Psoas muscle (tissue), 8 donors: ENCODE measurements at regions of chr1 and their contacts with region 1.

Region 1: GRCh38 chr1:159763686-159764085 is 17.1 kb upstream of the DUSP23 start:
- DNase-seq: no peak
- ATAC-seq: no peak
- H3K4me3 ChIP-seq: no peak overlapping the region
- H3K27ac ChIP-seq: no peak overlapping the region
- H3K4me1 ChIP-seq: no peaks in the 10 kb centered on the region
- H3K27me3 ChIP-seq: no peaks in the 10 kb centered on the region
- CTCF ChIP-seq: no peak

Region 2: DNA sequence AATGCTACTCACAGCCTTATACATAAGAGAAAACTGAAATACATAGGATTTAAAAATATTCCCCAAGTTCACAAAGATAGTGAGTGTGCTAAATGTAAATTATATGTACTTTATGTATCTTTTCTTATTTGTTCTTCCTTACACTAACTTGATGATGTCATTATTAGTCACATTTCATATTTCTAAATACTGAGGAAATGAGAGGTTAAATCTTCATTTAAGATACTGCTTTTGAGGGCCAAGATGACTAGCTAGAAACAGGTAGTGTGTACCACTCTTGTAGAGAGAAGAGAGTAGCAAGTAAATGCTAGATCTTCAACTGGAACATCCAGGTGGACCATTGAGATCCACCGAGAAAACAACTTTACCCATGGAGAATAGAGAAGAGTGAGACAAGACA is 802.5 kb before region 1 on chr1:
- intact Hi-C with region 1: no loop called
- DNase-seq: no peak
- ATAC-seq: no peak
- H3K4me3 ChIP-seq: no peak overlapping the region
- H3K27ac ChIP-seq: no peak overlapping the region
- H3K4me1 ChIP-seq: no peaks in the 10 kb centered on the region
- H3K27me3 ChIP-seq: no peaks in the 10 kb centered on the region
- CTCF ChIP-seq: no peak

Region 3: DNA sequence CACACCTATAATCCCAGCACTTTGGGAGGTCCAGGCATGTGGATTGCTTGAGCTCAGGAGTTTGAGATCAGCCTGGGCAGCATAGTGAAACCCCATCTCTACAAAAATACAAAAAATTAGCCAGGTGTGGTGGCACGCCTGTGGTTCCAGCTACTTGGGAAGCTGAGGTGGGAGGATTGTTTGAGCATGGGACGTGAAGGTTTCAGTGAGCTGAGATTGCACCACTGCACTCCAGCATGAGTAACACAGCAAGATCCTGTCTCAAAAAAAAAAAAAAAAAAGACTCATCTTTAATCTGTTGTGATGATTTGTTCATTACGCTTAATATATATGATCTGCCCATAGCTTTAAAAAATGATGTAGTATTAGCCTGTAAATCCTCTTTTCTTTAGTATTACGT is 280.2 kb before region 1 on chr1:
- intact Hi-C with region 1: no loop called
- DNase-seq: no peak
- ATAC-seq: no peak
- H3K4me3 ChIP-seq: no peak overlapping the region
- H3K27ac ChIP-seq: no peak overlapping the region
- H3K4me1 ChIP-seq: no peaks in the 10 kb centered on the region
- H3K27me3 ChIP-seq: no peaks in the 10 kb centered on the region
- CTCF ChIP-seq: no peak

Region 4: DNA sequence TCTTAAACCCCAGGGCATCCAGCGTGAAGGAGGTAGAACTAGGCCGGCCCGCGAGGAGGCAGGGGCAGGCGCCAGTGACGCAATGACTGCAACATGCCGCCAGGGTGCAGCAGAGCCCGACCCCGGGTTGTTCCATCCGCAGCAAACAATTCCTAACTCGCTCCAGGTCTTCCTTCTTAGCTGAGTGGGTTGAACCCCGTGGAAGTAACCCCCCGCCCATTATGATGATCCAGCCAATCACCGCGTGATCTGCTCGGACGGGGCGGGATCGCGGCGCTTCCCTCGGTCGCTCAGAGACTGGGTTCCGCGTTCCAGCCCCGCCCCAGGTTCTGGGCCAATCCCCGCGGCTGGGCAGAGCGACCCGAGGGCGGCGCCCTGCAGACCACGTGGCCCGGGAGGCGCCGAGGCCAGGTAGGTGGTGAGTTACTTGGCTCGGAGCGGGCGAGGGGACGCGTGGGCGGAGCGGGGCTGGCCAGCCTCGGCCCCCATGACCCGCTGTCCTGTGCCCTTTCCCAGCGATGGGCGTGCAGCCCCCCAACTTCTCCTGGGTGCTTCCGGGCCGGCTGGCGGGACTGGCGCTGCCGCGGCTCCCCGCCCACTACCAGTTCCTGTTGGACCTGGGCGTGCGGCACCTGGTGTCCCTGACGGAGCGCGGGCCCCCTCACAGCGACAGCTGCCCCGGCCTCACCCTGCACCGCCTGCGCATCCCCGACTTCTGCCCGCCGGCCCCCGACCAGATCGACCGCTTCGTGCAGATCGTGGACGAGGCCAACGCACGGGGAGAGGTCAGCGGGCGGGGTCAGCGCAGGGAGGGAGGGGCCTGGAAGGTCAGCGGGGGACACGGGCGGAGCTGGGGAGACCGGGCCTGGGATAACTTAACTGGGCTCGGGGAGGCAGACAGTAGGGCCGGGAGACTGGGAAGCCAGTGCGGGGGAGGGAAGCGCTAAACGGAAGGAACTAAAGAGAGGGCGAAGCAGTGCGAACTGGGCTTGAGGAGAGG is 17.2 kb after region 1 on chr1 and contains the start of gene DUSP23:
- intact Hi-C with region 1: no loop called
- DNase-seq: peak; percentile 98 to 99
- ATAC-seq: peak; percentile 93 to 97 (median 96)
- H3K4me3 ChIP-seq: peak within 1 kb of the TSS; percentile 72
- H3K27ac ChIP-seq: peak within 1 kb of the TSS; percentile 71
- H3K4me1 ChIP-seq: peaks cover 14% of the 10 kb centered on the region
- H3K27me3 ChIP-seq: no peaks in the 10 kb centered on the region
- CTCF ChIP-seq: peak; percentile 94
- total RNA-seq, gene DUSP23: 18.5 to 46.5 (median 29.3) TPM

Region 5: DNA sequence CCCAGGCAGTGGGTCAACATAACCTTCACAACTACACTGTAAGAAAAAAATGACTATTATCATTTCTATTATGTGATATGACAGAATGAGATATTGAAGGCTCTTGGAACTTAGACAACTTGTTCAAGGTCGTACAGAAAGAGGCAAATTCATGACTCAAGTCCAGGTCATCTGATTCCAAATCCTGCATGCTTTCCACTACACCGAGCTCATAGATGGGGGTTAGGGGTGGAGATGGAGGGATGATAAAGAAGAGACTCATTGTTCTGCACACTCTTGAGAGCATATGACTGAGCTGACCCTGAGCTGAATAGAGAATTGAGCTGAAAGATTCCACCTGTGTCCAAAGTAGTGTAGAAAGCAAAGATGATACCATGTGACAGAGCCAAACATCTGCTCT is 41.2 kb after region 1 on chr1:
- intact Hi-C with region 1: loop called in 1 of 2 experiments (anchors 1 kb)
- DNase-seq: no peak
- ATAC-seq: no peak
- H3K4me3 ChIP-seq: no peak overlapping the region
- H3K27ac ChIP-seq: no peak overlapping the region
- H3K4me1 ChIP-seq: no peaks in the 10 kb centered on the region
- H3K27me3 ChIP-seq: peaks cover 0 to 5% (median 0%) of the 10 kb centered on the region in 3 donors
- CTCF ChIP-seq: no peak